CD8-positive, alpha-beta T cell (primary cell): ENCODE measurements at regions of chr3 and their contacts with region 1.

Region 1: GRCh38 chr3:108153451-108153981 is 62.7 kb upstream of the CD47 start:
- DNase-seq: peak in 8 of 9 experiments; percentile 2 to 69 (median 39)
- ATAC-seq: peak; percentile 46
- H3K4me3 ChIP-seq: no peak overlapping the region
- H3K4me3 Mint-ChIP-seq: no peak overlapping the region
- H3K27ac ChIP-seq: no peak overlapping the region
- H3K27ac Mint-ChIP-seq: no peak overlapping the region
- H3K4me1 ChIP-seq: no peaks in the 10 kb centered on the region
- H3K4me1 Mint-ChIP-seq: peaks cover 3% of the 10 kb centered on the region
- H3K27me3 ChIP-seq: no peaks in the 10 kb centered on the region
- H3K27me3 Mint-ChIP-seq: no peaks in the 10 kb centered on the region
- CTCF ChIP-seq: peak; percentile 54

Region 2: DNA sequence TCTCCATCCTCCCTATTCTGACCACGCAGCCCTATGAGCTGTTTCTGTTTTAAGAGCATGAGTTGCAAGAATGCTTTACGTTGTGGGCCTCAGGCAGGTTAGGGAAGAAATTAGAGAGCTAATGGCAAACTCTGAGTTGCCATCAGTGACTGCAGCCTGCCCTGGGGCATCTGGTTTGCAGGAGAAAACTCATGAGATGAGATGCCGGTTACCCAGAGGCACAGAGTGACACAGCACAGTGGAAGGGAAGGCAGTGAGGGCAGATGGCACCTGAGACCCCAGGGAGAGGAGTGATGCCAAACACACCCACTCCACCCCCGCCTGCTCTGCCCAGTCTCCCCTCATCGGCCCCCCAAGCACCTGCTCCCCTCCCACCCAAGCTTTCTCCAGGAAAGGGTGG is 327.9 kb before region 1 on chr3:
- CTCF ChIA-PET with region 1: no interaction called
- POLR2A ChIA-PET with region 1: no interaction called
- intact Hi-C with region 1: no loop called
- DNase-seq: no peak
- ATAC-seq: no peak
- H3K4me3 ChIP-seq: no peak overlapping the region
- H3K4me3 Mint-ChIP-seq: no peak overlapping the region
- H3K27ac ChIP-seq: no peak overlapping the region
- H3K27ac Mint-ChIP-seq: no peak overlapping the region
- H3K4me1 ChIP-seq: no peaks in the 10 kb centered on the region
- H3K4me1 Mint-ChIP-seq: no peaks in the 10 kb centered on the region
- H3K27me3 ChIP-seq: no peaks in the 10 kb centered on the region
- H3K27me3 Mint-ChIP-seq: peaks cover 17% of the 10 kb centered on the region
- CTCF ChIP-seq: no peak

Region 3: GRCh38 chr3:108117241-108117775 is 36.2 kb before region 1 on chr3:
- CTCF ChIA-PET with region 1: no interaction called
- POLR2A ChIA-PET with region 1: no interaction called
- intact Hi-C with region 1: no loop called
- DNase-seq: no peak
- ATAC-seq: no peak
- H3K4me3 ChIP-seq: no peak overlapping the region
- H3K4me3 Mint-ChIP-seq: no peak overlapping the region
- H3K27ac ChIP-seq: no peak overlapping the region
- H3K27ac Mint-ChIP-seq: no peak overlapping the region
- H3K4me1 ChIP-seq: no peaks in the 10 kb centered on the region
- H3K4me1 Mint-ChIP-seq: peaks cover 7% of the 10 kb centered on the region
- H3K27me3 ChIP-seq: no peaks in the 10 kb centered on the region
- H3K27me3 Mint-ChIP-seq: no peaks in the 10 kb centered on the region
- CTCF ChIP-seq: no peak

Region 4: GRCh38 chr3:108322352-108322751 is 168.8 kb after region 1 on chr3:
- CTCF ChIA-PET with region 1: interaction called, 3 read pairs
- POLR2A ChIA-PET with region 1: no interaction called
- intact Hi-C with region 1: loop called in 1 of 2 experiments (anchors 5 kb)
- DNase-seq: peak in 6 of 9 experiments; percentile 2 to 53 (median 32)
- ATAC-seq: no peak
- H3K4me3 ChIP-seq: no peak overlapping the region
- H3K4me3 Mint-ChIP-seq: no peak overlapping the region
- H3K27ac ChIP-seq: no peak overlapping the region
- H3K27ac Mint-ChIP-seq: no peak overlapping the region
- H3K4me1 ChIP-seq: no peaks in the 10 kb centered on the region
- H3K4me1 Mint-ChIP-seq: no peaks in the 10 kb centered on the region
- H3K27me3 ChIP-seq: no peaks in the 10 kb centered on the region
- H3K27me3 Mint-ChIP-seq: no peaks in the 10 kb centered on the region
- CTCF ChIP-seq: no peak